ENCODE measurements at regions of chrX and their contacts with region 1.

Region 1: DNA sequence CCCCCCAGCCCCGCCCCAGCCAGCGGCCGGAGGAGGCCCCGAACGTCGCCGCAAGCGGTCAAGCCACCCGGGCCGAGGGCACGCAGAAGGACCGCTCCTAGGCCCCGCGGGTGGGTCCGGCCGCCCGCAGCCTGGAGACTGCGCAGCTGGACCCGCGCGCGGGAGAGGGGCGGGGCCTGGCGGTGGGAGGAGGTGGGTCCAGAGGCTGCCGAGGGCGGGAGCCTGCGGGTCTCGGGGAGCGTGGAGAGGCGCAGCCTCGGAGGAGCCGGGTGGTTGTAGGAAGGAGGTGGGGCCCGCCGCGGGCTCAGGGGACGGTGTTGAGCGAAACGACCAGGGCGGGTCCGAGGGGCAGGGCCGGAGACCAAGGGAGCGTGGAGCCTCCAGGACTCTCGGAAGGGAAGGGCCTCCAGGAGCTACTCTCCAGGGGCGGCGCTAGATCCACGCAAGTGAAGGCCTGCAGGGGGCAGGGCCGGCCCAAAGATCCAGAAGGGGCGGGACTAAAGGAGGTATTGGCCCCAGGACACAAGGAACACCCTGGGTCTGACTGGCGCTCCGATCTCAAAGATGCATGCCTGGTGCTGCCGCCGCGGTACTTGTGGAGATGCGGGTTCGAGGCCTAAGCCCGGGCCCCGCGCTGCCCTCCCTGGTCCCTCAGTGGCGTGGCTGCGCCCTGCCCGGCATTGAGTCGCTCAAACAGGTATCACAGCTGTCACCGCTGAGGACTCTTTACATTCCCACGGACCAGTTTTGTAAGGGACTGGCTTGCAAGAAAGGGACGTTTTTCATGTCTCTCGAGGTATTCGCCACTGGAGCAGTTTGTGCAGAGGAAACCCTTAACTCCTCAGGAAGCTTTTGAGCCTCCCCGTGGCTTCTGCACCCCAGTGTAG is 5.9 kb downstream of the TIMM17B start:
- DNase-seq: peak; percentile 61 to 88 (median 78)
- H3K4me3 ChIP-seq: peak overlapping the region; percentile 38 to 75 (median 65)
- H3K27ac ChIP-seq: peak overlapping the region in 55 of 59 donors; percentile 5 to 86 (median 74)
- H3K27me3 ChIP-seq: peaks cover 0 to 48% (median 5%) of the 10 kb centered on the region in 45 donors
- CTCF ChIP-seq: peak in 55 of 56 donors; percentile 27 to 77 (median 56)

Region 2: DNA sequence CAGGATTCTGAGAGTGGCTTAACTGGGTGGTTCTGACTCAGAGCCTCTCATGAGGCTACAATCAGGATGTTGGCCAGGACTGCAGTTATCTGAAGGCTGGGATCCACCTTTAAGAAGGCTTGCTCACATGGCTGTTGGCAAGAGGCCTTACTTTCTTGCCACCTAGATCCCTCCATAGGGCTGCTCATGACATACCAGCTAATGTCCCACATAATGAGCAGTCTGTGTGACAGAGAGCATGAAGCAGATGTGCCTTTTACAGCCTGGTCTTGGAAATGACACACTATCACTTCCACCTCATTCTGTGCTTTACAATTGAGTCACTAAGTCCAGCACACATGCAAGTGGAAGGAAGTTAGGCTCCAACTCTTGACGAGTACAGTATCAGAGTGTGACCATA is 321.7 kb before region 1 on chrX:
- intact Hi-C with region 1: no loop called
- DNase-seq: no peak
- H3K4me3 ChIP-seq: no peak overlapping the region
- H3K27ac ChIP-seq: no peak overlapping the region
- H3K27me3 ChIP-seq: peaks cover 0 to 19% (median 0%) of the 10 kb centered on the region in 45 donors
- CTCF ChIP-seq: no peak

Region 3: DNA sequence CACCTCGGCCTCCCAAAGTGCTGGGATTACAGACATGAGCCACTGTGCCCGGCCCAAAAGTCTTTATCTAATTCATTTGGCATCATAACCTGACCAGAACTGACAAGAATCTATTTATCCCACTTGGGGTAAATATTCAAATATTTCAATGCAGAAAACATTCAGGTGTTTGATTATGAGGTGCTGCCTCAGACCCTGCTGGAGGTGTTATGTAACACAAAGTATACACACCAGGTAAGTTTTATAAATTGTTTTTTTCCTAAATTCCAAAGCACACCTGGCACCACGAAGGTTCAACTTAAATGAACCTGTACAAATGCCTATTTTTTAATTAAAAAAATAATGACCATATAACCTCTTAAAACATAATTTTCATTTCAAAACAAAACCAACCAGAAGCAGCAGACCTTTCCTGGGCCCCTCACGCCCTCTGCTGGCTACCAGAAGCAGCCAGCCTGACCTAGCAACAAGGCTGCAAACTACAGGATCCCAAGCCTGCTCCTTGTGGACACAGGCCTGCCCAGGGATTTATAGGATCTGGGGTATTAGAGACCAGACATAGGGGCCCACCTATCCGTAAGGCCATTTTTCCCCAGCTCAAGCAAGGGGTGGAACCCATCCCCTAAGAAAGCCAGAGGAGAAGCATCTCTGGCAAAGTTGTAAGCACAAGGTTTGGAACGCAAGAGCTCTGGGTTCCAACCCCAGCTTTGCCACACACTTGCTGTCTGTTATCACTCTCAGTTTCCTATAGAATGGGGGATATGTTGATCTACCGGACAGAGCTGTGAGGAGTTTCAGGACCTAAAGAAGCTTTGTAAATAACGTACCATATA is 54.1 kb after region 1 on chrX:
- intact Hi-C with region 1: loop called in 1 of 2 experiments (anchors 5 kb)
- DNase-seq: peak in 9 of 10 donors; percentile 27 to 60 (median 45)
- H3K4me3 ChIP-seq: no peak overlapping the region
- H3K27ac ChIP-seq: peak overlapping the region in 2 of 59 donors; percentile 19 to 36
- H3K27me3 ChIP-seq: peaks cover 0 to 50% (median 5%) of the 10 kb centered on the region in 45 donors
- CTCF ChIP-seq: peak in 55 of 56 donors; percentile 30 to 75 (median 63)